Breast epithelium (tissue), 4 donors: ENCODE measurements at regions of chr3 and their contacts with region 1.

Region 1: GRCh38 chr3:24220859-24221657 is 273.6 kb downstream of the THRB start:
- DNase-seq: peak in 1 of 2 donors; percentile 44
- H3K4me3 ChIP-seq: no peak overlapping the region
- H3K27ac ChIP-seq: peak overlapping the region in 1 of 2 donors; percentile 33
- H3K4me1 ChIP-seq: peaks cover 0 to 10% of the 10 kb centered on the region in 2 donors
- H3K27me3 ChIP-seq: no peaks in the 10 kb centered on the region
- CTCF ChIP-seq: no peak
- POLR2A ChIP-seq: no peak

Region 2: DNA sequence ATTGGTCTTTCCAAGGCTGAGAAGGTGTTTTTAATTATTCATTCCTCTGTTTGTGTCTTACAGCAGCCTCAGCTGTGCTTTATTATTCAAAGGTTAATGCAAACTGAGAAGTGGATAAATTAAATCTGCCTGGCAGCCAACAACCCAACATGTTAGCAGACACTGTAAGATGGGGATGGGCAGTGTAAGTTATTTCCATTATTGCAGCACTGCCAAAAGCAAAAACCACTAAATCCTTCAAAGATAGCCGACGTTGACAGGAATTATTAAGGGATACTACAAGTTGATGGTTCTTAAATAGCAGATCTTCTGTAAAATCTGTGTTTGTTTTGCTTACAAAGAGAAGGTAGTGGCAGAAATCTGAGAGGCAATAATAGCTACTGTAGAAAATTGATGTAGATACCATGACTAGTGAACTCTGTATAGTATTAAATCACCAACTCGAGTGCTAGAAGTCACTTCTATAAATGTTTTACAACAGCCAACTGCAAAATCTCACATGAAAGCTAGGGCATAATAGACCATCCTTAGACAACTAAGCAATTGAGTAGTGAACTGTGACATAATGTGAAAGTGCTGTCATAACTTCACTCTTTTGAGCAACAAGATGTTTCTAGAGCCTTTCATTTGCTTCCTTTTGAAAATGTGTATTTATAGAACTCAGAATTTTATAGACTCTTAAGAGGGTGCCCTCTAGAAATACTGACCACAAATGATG is 739.3 kb before region 1 on chr3:
- intact Hi-C with region 1: no loop called
- DNase-seq: no peak
- H3K4me3 ChIP-seq: no peak overlapping the region
- H3K27ac ChIP-seq: no peak overlapping the region
- H3K4me1 ChIP-seq: no peaks in the 10 kb centered on the region
- H3K27me3 ChIP-seq: no peaks in the 10 kb centered on the region
- CTCF ChIP-seq: no peak
- POLR2A ChIP-seq: no peak

Region 3: DNA sequence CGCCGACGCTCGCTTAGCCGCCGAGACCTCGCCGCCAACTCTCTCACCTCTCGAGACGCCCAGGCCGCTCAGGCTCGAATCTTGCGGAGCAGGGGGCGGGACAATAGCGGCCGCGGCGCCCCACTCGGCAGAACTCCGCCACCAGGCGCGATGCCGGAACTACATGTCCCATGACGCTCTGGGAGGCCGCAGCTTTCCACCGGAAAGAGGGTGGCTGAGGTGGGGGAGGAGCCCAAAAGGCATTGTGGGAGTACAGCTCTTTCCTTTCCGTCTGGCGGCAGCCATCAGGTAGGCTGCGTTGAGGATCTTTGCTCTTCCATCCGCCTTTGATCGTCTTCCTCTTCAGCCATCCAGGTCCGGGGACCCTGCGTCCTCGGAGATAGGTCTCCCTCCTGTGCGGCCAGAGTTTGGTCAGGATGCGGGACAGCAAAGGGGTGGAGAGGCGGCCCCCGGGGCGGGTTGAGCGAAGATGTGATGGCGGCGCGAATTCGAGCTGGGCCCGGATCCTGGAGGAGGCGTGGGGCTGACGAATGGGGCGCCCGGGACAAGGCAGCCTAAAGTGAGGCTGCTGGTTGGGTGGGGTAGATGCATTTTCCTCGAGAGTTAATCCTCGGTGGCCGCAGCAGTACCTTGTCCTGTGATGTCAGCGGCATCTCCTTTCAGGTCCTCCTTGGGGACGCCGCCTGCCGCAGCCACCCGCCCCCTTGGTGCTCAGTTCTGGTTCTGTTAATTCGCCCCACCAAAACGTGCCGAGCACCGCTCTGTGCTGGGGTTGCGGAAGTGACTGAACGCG is 304.0 kb before region 1 on chr3 and contains the starts of genes NKIRAS1 and RPL15:
- intact Hi-C with region 1: no loop called
- DNase-seq: peak; percentile 96
- H3K4me3 ChIP-seq: peak within 1 kb of the TSS; percentile 81 to 98 (median 95)
- H3K27ac ChIP-seq: peak within 1 kb of the TSS; percentile 92 to 99
- H3K4me1 ChIP-seq: peaks cover 2 to 4% of the 10 kb centered on the region in 2 donors
- H3K27me3 ChIP-seq: no peaks in the 10 kb centered on the region
- CTCF ChIP-seq: peak; percentile 84 to 94 (median 90)
- POLR2A ChIP-seq: peak; percentile 96
- total RNA-seq, gene NKIRAS1: 15.7 to 20.3 (median 19.2) TPM
- total RNA-seq, gene RPL15: 2,644 to 3,809 (median 3,544) TPM

Region 4: GRCh38 chr3:24199775-24200247 is 21.2 kb before region 1 on chr3:
- intact Hi-C with region 1: no loop called
- DNase-seq: no peak
- H3K4me3 ChIP-seq: no peak overlapping the region
- H3K27ac ChIP-seq: peak overlapping the region in 1 of 2 donors; percentile 27
- H3K4me1 ChIP-seq: no peaks in the 10 kb centered on the region
- H3K27me3 ChIP-seq: no peaks in the 10 kb centered on the region
- CTCF ChIP-seq: no peak
- POLR2A ChIP-seq: no peak

Region 5: GRCh38 chr3:24373198-24373959 is 152.3 kb after region 1 on chr3:
- intact Hi-C with region 1: loop called (anchors 5 kb)
- DNase-seq: peak; percentile 63 to 82
- H3K4me3 ChIP-seq: no peak overlapping the region
- H3K27ac ChIP-seq: peak overlapping the region; percentile 59 to 64
- H3K4me1 ChIP-seq: peaks cover 0 to 10% of the 10 kb centered on the region in 2 donors
- H3K27me3 ChIP-seq: no peaks in the 10 kb centered on the region
- CTCF ChIP-seq: no peak
- POLR2A ChIP-seq: no peak